ENCODE measurements at regions of chr19 and their contacts with region 1.

Region 1: GRCh38 chr19:42423462-42424344 is 3.5 kb downstream of the LIPE start:
- DNase-seq: peak; percentile 91
- ATAC-seq: peak; percentile 90
- H3K4me3 Mint-ChIP-seq: peak overlapping the region; percentile 98
- H3K27ac Mint-ChIP-seq: peak overlapping the region; percentile 98
- H3K4me1 Mint-ChIP-seq: peaks cover 46% of the 10 kb centered on the region
- H3K27me3 Mint-ChIP-seq: no peaks in the 10 kb centered on the region
- CTCF ChIP-seq: no peak

Region 2: GRCh38 chr19:41327576-41328156 is 1096.0 kb before region 1 on chr19:
- CTCF ChIA-PET with region 1: no interaction called
- POLR2A ChIA-PET with region 1: interaction called, 11 read pairs
- intact Hi-C with region 1: no loop called
- DNase-seq: peak; percentile 77
- ATAC-seq: peak; percentile 71
- H3K4me3 Mint-ChIP-seq: peak overlapping the region; percentile 77
- H3K27ac Mint-ChIP-seq: peak overlapping the region; percentile 91
- H3K4me1 Mint-ChIP-seq: peaks cover 70% of the 10 kb centered on the region
- H3K27me3 Mint-ChIP-seq: no peaks in the 10 kb centered on the region
- CTCF ChIP-seq: no peak

Region 3: GRCh38 chr19:42386974-42387707 is 36.6 kb before region 1 on chr19:
- CTCF ChIA-PET with region 1: no interaction called
- POLR2A ChIA-PET with region 1: interaction called, 3 read pairs
- intact Hi-C with region 1: loop called (anchors 5 kb)
- DNase-seq: peak; percentile 86
- ATAC-seq: peak; percentile 95
- H3K4me3 Mint-ChIP-seq: peak overlapping the region; percentile 78
- H3K27ac Mint-ChIP-seq: peak overlapping the region; percentile 63
- H3K4me1 Mint-ChIP-seq: peaks cover 7% of the 10 kb centered on the region
- H3K27me3 Mint-ChIP-seq: peaks cover 32% of the 10 kb centered on the region
- CTCF ChIP-seq: no peak

Region 4: GRCh38 chr19:42401365-42402303 is 22.1 kb before region 1 on chr19:
- CTCF ChIA-PET with region 1: interaction called, 4 read pairs
- POLR2A ChIA-PET with region 1: interaction called, 23 read pairs
- intact Hi-C with region 1: loop called (anchors 1 kb)
- DNase-seq: peak; percentile 74
- ATAC-seq: peak; percentile 49
- H3K4me3 Mint-ChIP-seq: peak overlapping the region; percentile 80
- H3K27ac Mint-ChIP-seq: peak overlapping the region; percentile 72
- H3K4me1 Mint-ChIP-seq: peaks cover 46% of the 10 kb centered on the region
- H3K27me3 Mint-ChIP-seq: no peaks in the 10 kb centered on the region
- CTCF ChIP-seq: no peak

Region 5: GRCh38 chr19:42468273-42468796 is 44.6 kb after region 1 on chr19:
- CTCF ChIA-PET with region 1: no interaction called
- POLR2A ChIA-PET with region 1: interaction called, 10 read pairs
- intact Hi-C with region 1: no loop called
- DNase-seq: no peak
- ATAC-seq: no peak
- H3K4me3 Mint-ChIP-seq: no peak overlapping the region
- H3K27ac Mint-ChIP-seq: no peak overlapping the region
- H3K4me1 Mint-ChIP-seq: peaks cover 53% of the 10 kb centered on the region
- H3K27me3 Mint-ChIP-seq: no peaks in the 10 kb centered on the region
- CTCF ChIP-seq: no peak

Measured in activated B cell treated with CpG ODN at 0.5 μM for 24 hours (primary cell).